ENCODE measurements at regions of chr17 and their contacts with region 1.

Region 1: DNA sequence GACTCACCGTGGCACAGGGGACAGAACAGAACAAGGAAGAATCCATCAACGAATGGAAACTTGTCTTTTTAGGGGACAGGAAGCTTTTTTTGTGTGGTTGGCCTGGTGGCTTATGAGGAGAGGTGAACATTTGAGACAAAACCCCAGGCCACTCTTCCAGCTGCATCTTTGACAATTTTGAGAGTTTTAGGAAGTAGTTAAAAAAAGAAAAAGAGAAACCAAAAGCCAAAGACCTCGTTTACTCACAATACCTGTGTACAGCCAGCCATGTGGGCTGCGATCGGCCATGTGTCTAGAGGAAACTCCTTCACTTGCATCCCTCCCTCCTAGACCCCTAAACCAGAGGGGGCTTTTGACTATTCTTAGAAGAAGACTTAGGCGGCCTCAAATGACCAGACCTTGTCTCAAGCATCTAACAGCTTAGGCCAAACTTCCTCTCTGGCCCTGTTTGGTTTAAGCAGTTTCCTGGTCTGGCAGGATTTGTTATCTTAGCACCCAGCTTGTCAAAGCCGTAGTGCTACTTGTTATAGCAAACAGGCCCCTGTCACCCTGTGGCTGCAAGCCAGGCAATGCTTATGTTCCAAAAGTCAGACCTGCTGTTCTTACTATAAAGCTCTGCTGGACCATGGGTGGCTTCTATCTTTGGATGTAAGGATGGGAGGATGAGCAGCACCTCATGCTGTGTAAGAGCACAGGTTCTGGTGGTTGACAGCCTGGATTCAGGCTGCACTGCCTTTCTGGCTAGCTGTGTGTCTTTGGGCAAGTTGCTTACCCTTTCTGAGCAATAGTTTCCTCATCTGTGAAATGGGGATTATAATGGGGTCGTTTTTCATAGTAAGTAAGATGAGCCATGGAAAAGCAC is 17.7 kb downstream of the KSR1 start:
- DNase-seq: peak; percentile 83
- H3K4me3 Mint-ChIP-seq: peak overlapping the region; percentile 61
- H3K27ac Mint-ChIP-seq: peak overlapping the region; percentile 98
- H3K4me1 Mint-ChIP-seq: peaks cover 87% of the 10 kb centered on the region
- H3K27me3 Mint-ChIP-seq: no peaks in the 10 kb centered on the region

Region 2: DNA sequence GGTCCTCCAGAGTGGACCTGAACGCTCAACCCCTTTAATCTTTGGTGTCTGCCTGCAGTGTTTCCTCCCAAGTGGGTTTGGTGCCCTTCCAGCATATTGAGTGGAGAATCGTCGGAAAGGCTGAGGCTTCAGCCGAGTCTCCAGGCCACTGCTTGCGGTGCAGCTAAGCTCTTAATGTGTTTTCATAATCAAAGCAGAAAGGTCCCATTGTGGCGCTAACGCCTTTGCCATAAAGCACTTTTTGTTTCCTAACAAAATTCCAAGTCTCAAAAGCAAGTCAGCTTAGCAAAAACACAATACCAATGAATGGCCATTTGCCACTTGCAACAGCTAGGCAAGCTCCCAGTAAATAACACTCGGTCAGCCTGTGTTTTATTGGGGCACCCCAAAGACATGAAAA is 39.9 kb after region 1 on chr17:
- CTCF ChIA-PET with region 1: no interaction called
- POLR2A ChIA-PET with region 1: no interaction called
- DNase-seq: no peak
- H3K4me3 Mint-ChIP-seq: no peak overlapping the region
- H3K27ac Mint-ChIP-seq: no peak overlapping the region
- H3K4me1 Mint-ChIP-seq: peaks cover 14% of the 10 kb centered on the region
- H3K27me3 Mint-ChIP-seq: no peaks in the 10 kb centered on the region

Region 3: GRCh38 chr17:27544350-27545131 is 70.6 kb after region 1 on chr17:
- CTCF ChIA-PET with region 1: interaction called, 5 read pairs
- POLR2A ChIA-PET with region 1: interaction called, 16 read pairs
- DNase-seq: peak; percentile 80
- H3K4me3 Mint-ChIP-seq: peak overlapping the region; percentile 54
- H3K27ac Mint-ChIP-seq: peak overlapping the region; percentile 76
- H3K4me1 Mint-ChIP-seq: peaks cover 78% of the 10 kb centered on the region
- H3K27me3 Mint-ChIP-seq: no peaks in the 10 kb centered on the region

Measured in activated CD4-positive, alpha-beta memory T cell treated with anti-CD3 and anti-CD28 coated beads, Interleukin-2, amount 10 ng/mL, durations not matched to agents 7 days and 5 days (primary cell).